Panc1 (cell line): ENCODE measurements at regions of chr5 and their contacts with region 1.

Region 1: GRCh38 chr5:151164686-151165392 is 7.3 kb upstream of the ANXA6 start:
- DNase-seq: peak; percentile 75
- ATAC-seq: peak; percentile 99
- H3K4me3 ChIP-seq: no peak overlapping the region
- H3K27ac ChIP-seq: no peak overlapping the region
- H3K4me1 ChIP-seq: no peaks in the 10 kb centered on the region
- H3K27me3 ChIP-seq: no peaks in the 10 kb centered on the region; the same call in 1 of the 2 replicates
- CTCF ChIP-seq: peak; percentile 92

Region 2: GRCh38 chr5:150801117-150801927 is 363.5 kb before region 1 on chr5:
- CTCF ChIA-PET with region 1: interaction called, 4 read pairs
- POLR2A ChIA-PET with region 1: no interaction called
- in situ Hi-C with region 1: no loop called
- intact Hi-C with region 1: loop called (anchors 10 kb)
- DNase-seq: peak; percentile 87
- ATAC-seq: peak; percentile 95
- H3K4me3 ChIP-seq: peak overlapping the region; percentile 38 to 65
- H3K27ac ChIP-seq: peak overlapping the region; percentile 82
- H3K4me1 ChIP-seq: peaks cover 12% of the 10 kb centered on the region
- H3K27me3 ChIP-seq: no peaks in the 10 kb centered on the region
- CTCF ChIP-seq: peak; percentile 82

Region 3: DNA sequence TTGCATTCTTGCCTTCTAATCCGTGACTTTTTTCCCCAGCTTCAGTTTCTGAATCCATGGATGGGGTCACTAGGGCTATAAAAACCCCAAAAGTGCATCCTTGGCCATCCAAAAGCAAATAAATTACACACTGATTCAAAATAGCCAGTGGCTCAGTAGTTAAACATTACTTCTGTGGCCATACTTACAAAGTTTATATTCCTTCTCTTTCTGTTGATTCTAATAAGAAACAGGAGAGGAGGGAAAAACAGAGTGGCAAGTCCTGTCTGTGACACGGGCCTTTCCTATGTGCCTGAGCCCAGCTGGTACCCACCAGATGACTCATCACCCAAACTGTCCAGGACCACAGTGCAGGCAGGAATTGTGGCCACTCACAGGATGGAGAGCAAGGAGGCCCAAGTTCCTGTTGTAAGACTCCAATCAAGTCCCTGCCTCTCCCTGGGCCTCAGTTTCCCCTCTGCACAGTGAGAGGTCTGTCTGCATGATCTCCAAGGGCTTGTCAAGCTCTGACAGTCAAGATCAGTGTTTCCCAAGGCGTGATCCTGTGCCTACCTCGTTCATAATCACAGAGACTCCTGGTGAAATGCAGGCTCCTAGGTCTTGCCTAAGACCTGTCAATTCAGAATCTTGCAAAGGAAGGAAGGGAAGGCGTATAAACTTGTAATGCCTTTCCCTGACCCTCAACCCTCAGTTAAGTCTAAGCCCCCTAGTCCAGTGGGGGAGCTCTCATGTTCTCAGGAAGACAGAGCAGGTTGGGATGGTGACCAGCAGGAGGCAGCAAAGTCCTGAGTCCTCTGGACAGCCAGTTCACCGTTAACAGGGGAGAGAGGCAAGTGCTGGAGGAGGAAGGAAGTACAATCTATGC is 113.5 kb before region 1 on chr5:
- CTCF ChIA-PET with region 1: interaction called, 3 read pairs
- POLR2A ChIA-PET with region 1: no interaction called
- in situ Hi-C with region 1: no loop called
- intact Hi-C with region 1: loop called (anchors 5 kb)
- DNase-seq: no peak
- ATAC-seq: peak; percentile 91
- H3K4me3 ChIP-seq: no peak overlapping the region
- H3K27ac ChIP-seq: no peak overlapping the region
- H3K4me1 ChIP-seq: no peaks in the 10 kb centered on the region
- H3K27me3 ChIP-seq: no peaks in the 10 kb centered on the region
- CTCF ChIP-seq: peak; percentile 89

Region 4: DNA sequence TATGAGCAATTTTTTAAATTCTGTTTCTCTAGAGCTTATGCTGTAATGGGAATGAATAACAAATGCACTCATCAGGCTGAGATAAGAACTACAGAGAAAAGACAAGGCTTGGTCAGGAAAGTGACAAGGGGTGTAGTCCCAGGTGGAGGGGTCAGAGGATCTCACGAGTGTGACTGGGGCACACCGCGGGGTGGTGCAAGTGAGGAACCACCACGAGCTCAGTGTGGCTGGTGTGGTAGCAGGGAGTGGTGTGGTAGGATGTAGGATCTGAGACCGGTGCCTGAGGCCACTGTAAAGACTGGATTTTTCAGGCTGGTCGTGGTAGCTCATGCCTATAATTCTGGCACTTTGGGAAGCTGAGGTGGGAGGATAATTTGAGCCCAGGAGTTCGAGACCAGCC is 16.3 kb before region 1 on chr5:
- CTCF ChIA-PET with region 1: interaction called, 13 read pairs
- POLR2A ChIA-PET with region 1: interaction called, 3 read pairs
- in situ Hi-C with region 1: no loop called
- intact Hi-C with region 1: no loop called
- DNase-seq: no peak
- ATAC-seq: no peak
- H3K4me3 ChIP-seq: no peak overlapping the region
- H3K27ac ChIP-seq: no peak overlapping the region
- H3K4me1 ChIP-seq: no peaks in the 10 kb centered on the region
- H3K27me3 ChIP-seq: no peaks in the 10 kb centered on the region
- CTCF ChIP-seq: no peak

Region 5: DNA sequence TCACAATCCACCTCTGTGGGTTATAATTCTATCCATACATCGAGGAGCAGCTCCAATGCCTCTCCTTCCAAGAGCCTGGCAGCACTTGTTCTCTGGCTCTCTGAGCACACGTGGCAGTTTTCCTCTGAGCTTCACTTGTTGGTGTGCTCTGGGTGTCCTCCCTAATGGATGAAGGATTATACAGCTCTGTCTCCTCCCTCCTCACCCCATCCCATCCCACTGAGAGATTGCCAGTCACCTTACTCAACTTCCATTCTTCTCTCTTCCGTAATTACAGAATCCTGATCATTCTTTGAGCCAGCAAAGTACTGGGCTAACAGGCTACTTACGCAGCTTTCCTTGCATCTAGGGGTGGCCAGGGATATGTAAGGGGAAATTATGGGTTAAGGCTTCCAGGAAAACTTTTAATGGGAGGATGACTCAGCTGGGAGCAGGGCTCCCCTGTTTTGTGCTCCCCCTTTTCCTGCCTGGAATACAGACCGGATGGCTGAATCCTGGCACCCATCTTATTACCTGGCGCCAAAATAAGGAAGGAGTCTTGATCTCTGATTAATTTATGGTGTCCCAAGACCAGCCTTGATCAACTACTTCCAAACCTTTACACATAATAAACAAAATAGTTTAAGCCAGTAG is 65.3 kb after region 1 on chr5:
- CTCF ChIA-PET with region 1: no interaction called
- POLR2A ChIA-PET with region 1: no interaction called
- in situ Hi-C with region 1: no loop called
- intact Hi-C with region 1: no loop called
- DNase-seq: no peak
- ATAC-seq: no peak
- H3K4me3 ChIP-seq: no peak overlapping the region
- H3K27ac ChIP-seq: no peak overlapping the region
- H3K4me1 ChIP-seq: no peaks in the 10 kb centered on the region
- H3K27me3 ChIP-seq: peaks cover 2% of the 10 kb centered on the region
- CTCF ChIP-seq: no peak

Region 6: DNA sequence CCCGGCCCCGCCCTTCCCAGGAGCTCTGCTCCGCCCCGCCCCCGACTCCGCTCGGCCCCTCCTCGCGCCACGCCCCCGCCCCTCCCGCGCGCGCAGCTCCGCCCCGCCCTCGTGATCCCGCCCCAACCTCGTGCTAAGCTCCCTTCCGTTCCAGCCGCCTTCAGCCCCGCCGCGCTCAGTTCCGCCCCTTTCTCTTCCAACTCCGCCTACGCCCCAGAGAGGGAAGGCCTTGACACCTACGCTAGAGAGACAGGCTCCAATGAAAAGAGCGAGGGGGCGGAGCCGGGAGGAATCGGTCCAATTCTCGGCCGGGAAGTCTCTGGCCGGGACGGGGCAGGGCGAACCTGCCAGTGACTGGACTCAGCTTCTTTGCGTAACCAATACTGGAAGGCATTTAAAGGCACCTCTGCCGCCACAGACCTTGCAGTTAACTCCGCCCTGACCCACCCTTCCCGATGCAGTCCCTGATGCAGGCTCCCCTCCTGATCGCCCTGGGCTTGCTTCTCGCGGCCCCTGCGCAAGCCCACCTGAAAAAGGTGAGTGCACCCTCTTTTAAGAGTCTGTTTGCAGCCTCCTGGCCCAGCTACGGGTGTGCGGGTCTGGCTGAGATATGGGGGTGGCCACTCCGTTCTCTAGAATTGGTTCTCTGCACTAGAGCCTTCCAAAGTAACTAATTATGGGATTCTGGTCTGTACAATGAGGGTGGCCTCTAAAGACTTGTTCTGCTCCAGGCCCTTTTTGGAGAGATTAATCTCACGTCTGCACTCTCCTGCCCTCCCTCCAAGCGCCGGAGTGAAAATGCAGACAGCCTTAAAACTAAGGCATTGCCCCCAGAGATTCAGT is 88.1 kb after region 1 on chr5 and contains the start of gene GM2A:
- CTCF ChIA-PET with region 1: interaction called, 3 read pairs
- POLR2A ChIA-PET with region 1: interaction called, 10 read pairs
- in situ Hi-C with region 1: no loop called
- intact Hi-C with region 1: no loop called
- DNase-seq: peak; percentile 95
- ATAC-seq: peak; percentile 97
- H3K4me3 ChIP-seq: peak within 1 kb of the TSS; percentile 92 to 96
- H3K27ac ChIP-seq: peak within 1 kb of the TSS; percentile 88
- H3K4me1 ChIP-seq: peaks cover 10% of the 10 kb centered on the region; the same call in 1 of the 2 replicates
- H3K27me3 ChIP-seq: no peaks in the 10 kb centered on the region
- CTCF ChIP-seq: no peak
- total RNA-seq, gene GM2A: 40.7 TPM

Region 7: DNA sequence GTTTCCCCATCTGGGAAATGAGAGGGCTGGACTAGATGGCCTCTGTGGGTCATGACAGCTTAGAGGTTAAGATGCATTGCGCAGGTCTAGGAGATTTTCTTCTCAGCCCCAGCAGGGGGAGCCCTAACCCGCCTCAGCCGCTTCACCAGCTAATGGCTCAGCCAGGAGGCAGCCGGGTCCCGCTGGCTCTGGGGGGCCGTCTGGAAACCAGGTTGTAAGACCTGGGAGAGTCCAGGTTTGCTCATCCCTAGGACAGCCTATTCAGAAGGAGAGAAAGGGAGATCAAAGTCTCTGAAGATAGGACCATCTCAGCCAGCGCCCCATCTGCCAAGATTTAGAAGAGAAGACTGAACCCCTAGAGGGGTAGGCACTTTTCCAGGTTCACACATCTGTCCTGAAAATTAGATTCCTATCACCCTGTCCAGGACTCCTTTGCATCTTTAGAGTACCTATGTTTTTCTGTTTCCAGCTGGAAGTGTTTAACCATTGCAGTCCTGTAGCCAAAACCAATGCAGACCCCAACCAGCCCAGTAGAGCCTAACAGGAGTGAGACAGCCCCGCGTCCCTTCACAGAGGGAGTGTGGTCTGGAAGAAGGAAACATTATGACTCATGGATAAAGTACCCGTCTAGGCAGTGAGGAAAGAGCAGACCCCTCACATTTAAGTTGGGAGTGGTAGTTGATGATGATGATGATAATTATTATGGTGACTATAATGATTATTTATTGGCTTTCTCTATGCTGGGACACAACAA is 494.3 kb after region 1 on chr5:
- CTCF ChIA-PET with region 1: no interaction called
- POLR2A ChIA-PET with region 1: no interaction called
- in situ Hi-C with region 1: no loop called
- intact Hi-C with region 1: no loop called
- DNase-seq: peak; percentile 47
- ATAC-seq: peak; percentile 95
- H3K4me3 ChIP-seq: no peak overlapping the region
- H3K27ac ChIP-seq: peak overlapping the region; percentile 83
- H3K4me1 ChIP-seq: peaks cover 21% of the 10 kb centered on the region
- H3K27me3 ChIP-seq: no peaks in the 10 kb centered on the region
- CTCF ChIP-seq: peak; percentile 94

Region 8: DNA sequence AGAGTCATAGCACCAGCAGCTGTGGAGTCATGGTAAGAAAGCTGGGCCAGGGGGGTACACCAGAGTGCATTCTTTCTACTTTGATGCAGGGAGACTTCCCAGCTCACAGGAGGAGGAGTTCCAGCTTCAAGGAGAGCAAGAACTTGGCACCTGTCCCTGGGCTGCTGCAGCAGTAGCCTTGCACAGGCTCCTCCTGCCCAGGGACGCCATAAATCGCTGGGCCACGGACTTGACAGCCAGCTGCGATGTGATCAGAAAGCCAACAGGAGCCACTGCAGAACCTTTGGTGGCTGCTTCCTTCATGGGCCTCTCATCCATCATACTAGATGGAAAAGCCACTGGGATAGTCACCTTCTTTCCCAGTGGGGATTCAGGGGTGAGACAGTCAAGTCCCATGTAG is 1005.5 kb after region 1 on chr5:
- CTCF ChIA-PET with region 1: no interaction called
- POLR2A ChIA-PET with region 1: no interaction called
- in situ Hi-C with region 1: no loop called
- intact Hi-C with region 1: no loop called
- DNase-seq: no peak
- ATAC-seq: peak; percentile 38; the same call in 1 of the 2 replicates
- H3K4me3 ChIP-seq: no peak overlapping the region
- H3K27ac ChIP-seq: no peak overlapping the region
- H3K4me1 ChIP-seq: no peaks in the 10 kb centered on the region
- H3K27me3 ChIP-seq: peaks cover 2% of the 10 kb centered on the region; the same call in 1 of the 2 replicates
- CTCF ChIP-seq: no peak